CD14-positive monocyte (primary cell): ENCODE measurements at regions of chr16 and their contacts with region 1.

Region 1: GRCh38 chr16:55543472-55543871 is 23.0 kb upstream of the CAPNS2 start:
- DNase-seq: no peak
- H3K4me3 ChIP-seq: no peak overlapping the region
- H3K4me3 Mint-ChIP-seq: no peak overlapping the region
- H3K27ac ChIP-seq: no peak overlapping the region
- H3K27ac Mint-ChIP-seq: no peak overlapping the region
- H3K4me1 ChIP-seq: peaks cover 13 to 33% of the 10 kb centered on the region in 2 donors
- H3K4me1 Mint-ChIP-seq: peaks cover 15% of the 10 kb centered on the region
- H3K27me3 ChIP-seq: no peaks in the 10 kb centered on the region
- H3K27me3 Mint-ChIP-seq: peaks cover 0 to 2% (median 0%) of the 10 kb centered on the region in 3 donors
- CTCF ChIP-seq: peak; percentile 25

Region 2: DNA sequence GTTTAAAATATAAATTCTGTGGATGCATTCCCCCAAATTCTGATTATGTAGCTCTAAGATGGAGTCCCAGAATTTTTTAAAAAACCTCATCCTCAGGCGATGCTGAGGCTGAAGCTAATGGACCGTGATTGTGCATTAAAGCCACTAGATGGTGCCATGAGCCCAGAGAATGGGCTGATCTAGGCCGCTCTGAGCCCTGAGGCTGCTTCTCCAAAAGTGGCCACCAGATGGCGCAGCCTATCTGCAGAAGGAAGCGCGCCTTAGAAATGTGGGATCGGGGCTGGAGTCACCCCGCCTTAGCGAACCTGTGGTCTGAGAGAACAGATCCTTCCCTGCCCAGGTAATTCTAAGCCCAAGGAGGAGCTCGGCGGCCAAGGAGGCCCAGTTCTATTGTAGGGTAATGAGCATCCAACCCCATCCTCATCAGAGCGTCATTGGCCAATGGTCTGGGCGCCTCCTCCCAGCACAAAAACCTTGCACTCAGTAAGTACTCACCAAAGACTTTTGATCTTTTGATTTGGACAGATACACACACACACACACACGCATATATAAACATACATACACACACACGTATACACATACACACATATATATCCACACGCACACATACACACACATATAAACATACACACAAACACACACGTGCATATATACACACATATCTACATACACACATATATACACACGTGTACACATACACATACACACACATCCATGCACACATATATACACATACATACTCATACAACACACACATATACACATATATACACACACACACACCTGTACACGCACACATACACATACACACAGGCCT is 78.2 kb before region 1 on chr16:
- intact Hi-C with region 1: loop called in 1 of 2 experiments (anchors 10 kb)
- DNase-seq: peak; percentile 86 to 91 (median 89)
- H3K4me3 ChIP-seq: no peak overlapping the region
- H3K4me3 Mint-ChIP-seq: no peak overlapping the region
- H3K27ac ChIP-seq: no peak overlapping the region
- H3K27ac Mint-ChIP-seq: peak overlapping the region in 1 of 7 donors; percentile 55
- H3K4me1 ChIP-seq: peaks cover 0 to 3% of the 10 kb centered on the region in 2 donors
- H3K4me1 Mint-ChIP-seq: peaks cover 11% of the 10 kb centered on the region
- H3K27me3 ChIP-seq: no peaks in the 10 kb centered on the region
- H3K27me3 Mint-ChIP-seq: peaks cover 0 to 4% (median 2%) of the 10 kb centered on the region in 3 donors
- CTCF ChIP-seq: peak; percentile 100

Region 3: DNA sequence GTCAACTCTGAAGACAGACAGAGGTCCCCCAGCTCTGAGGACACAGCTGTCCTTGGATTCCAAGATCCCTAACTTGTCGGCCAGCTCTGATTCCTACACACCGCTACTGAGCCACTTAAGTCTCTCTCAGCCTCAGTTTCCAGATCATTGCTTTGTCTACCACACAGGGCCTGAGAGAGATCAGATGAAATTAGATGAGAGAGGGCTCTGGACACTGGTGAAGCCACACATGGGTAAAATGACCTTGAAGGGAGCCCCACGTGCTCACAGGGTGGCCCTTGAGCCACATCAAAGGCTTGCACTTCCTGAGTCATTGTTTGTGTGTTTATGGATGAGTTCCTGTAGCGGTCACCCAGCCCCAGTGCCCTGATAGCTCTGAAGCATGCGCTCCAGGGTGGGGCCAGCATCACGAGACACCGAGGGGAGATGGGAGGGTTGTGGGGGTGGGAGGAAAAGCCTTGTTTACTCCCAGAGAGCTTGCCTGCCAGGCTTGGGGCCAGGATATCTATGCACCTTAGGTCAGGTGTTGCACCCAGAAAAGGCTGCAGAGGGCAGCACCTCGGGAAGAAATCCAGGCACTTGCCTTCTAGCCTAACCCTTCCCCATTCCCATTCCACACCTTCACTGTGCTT is 79.6 kb after region 1 on chr16:
- intact Hi-C with region 1: no loop called
- DNase-seq: no peak
- H3K4me3 ChIP-seq: no peak overlapping the region
- H3K4me3 Mint-ChIP-seq: no peak overlapping the region
- H3K27ac ChIP-seq: no peak overlapping the region
- H3K27ac Mint-ChIP-seq: no peak overlapping the region
- H3K4me1 ChIP-seq: peaks cover 0 to 7% of the 10 kb centered on the region in 2 donors
- H3K4me1 Mint-ChIP-seq: no peaks in the 10 kb centered on the region
- H3K27me3 ChIP-seq: no peaks in the 10 kb centered on the region
- H3K27me3 Mint-ChIP-seq: peaks cover 0 to 2% (median 0%) of the 10 kb centered on the region in 3 donors
- CTCF ChIP-seq: no peak

Region 4: GRCh38 chr16:55981557-55981956 is 438.1 kb after region 1 on chr16:
- intact Hi-C with region 1: no loop called
- DNase-seq: no peak
- H3K4me3 ChIP-seq: no peak overlapping the region
- H3K4me3 Mint-ChIP-seq: no peak overlapping the region
- H3K27ac ChIP-seq: no peak overlapping the region
- H3K27ac Mint-ChIP-seq: no peak overlapping the region
- H3K4me1 ChIP-seq: no peaks in the 10 kb centered on the region
- H3K4me1 Mint-ChIP-seq: peaks cover 2% of the 10 kb centered on the region
- H3K27me3 ChIP-seq: no peaks in the 10 kb centered on the region
- H3K27me3 Mint-ChIP-seq: peaks cover 0 to 7% (median 6%) of the 10 kb centered on the region in 3 donors
- CTCF ChIP-seq: no peak